GM12878 (cell line): ENCODE measurements at regions of chr11 and their contacts with region 1.

Region 1: DNA sequence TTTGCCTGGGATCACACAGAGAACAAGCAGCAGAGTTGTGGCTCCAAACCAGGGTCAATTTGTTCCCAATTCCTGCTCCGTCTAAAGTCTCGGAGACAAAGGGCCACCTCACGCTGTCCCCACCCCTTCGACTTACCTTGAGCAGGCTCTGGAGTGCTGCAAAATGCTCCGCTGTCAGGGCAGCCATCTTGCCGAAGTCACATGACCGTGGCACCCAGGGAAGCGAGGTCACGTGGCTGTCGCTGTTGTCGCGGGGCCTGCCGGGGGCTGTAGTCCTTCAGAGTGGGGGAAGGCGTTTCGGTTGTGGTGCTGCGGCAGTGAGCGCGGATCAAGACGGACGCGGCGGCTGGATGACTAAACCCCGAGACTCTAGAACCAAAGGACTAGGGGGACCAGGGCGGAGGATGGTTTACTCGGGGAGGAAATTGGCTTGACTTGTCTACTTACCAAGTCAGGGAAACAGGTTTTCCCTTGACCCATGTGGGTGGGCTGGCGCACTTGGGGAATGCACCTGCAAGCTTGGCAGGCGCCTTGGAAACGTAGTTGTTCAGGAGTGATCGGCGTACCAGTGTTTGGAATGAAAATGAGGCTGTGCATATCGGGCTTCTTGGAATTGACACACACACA is at the start of gene COMMD9:
- DNase-seq: peak; percentile 56
- ATAC-seq: peak; percentile 98
- H3K4me3 ChIP-seq: peak within 1 kb of the TSS; percentile 93
- H3K27ac ChIP-seq: no peak within 1 kb of the TSS
- H3K4me1 ChIP-seq: peaks cover 3% of the 10 kb centered on the region; the same call in 1 of the 2 replicates
- H3K27me3 ChIP-seq: no peaks in the 10 kb centered on the region
- CTCF ChIP-seq: no peak
- EP300 ChIP-seq: no peak
- POLR2A ChIP-seq: peak; percentile 88
- RAD21 ChIP-seq: peak; percentile 19; the same call in 1 of the 2 replicates
- polyA plus RNA-seq, gene COMMD9: 102 to 119 TPM

Region 2: GRCh38 chr11:36230779-36231699 is 58.3 kb before region 1 on chr11:
- CTCF ChIA-PET with region 1: no interaction called
- POLR2A ChIA-PET with region 1: no interaction called
- RAD21 ChIA-PET with region 1: no interaction called
- SMC1A ChIA-PET with region 1: no interaction called
- in situ Hi-C with region 1: no loop called
- intact Hi-C with region 1: no loop called
- DNase-seq: no peak
- ATAC-seq: no peak
- H3K4me3 ChIP-seq: no peak overlapping the region
- H3K27ac ChIP-seq: no peak overlapping the region
- H3K4me1 ChIP-seq: no peaks in the 10 kb centered on the region
- H3K27me3 ChIP-seq: no peaks in the 10 kb centered on the region
- CTCF ChIP-seq: no peak
- EP300 ChIP-seq: no peak
- POLR2A ChIP-seq: no peak
- RAD21 ChIP-seq: no peak

Region 3: DNA sequence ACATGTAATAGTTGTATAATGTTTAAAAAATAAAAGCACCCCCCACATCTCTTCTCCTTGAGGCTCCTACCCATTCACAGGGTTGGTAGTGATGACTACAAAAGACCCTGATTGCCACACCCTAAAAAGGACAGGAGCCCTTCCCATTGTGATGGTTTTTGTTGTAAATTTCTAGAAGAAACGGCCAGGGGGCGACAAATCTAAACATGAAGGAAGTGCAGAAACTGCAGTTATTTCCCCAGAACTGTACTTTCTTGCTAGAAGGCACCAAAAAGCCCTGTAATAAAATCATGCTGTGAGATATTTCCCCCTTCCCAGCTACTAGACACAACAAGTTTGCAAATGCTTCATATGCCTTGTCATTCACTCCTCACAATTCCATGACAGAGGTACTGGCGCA is 17.5 kb after region 1 on chr11:
- CTCF ChIA-PET with region 1: interaction called, 11 read pairs
- POLR2A ChIA-PET with region 1: no interaction called
- RAD21 ChIA-PET with region 1: interaction called, 4 read pairs
- SMC1A ChIA-PET with region 1: interaction called, 20 read pairs
- in situ Hi-C with region 1: no loop called
- intact Hi-C with region 1: no loop called
- DNase-seq: no peak
- ATAC-seq: peak; percentile 79
- H3K4me3 ChIP-seq: no peak overlapping the region
- H3K27ac ChIP-seq: no peak overlapping the region
- H3K4me1 ChIP-seq: no peaks in the 10 kb centered on the region
- H3K27me3 ChIP-seq: no peaks in the 10 kb centered on the region; a peak in 1 of 4 replicates
- CTCF ChIP-seq: peak; percentile 46 to 62 (median 50); a peak in 5 of 6 replicates
- EP300 ChIP-seq: no peak
- POLR2A ChIP-seq: no peak
- RAD21 ChIP-seq: peak; percentile 83

Region 4: DNA sequence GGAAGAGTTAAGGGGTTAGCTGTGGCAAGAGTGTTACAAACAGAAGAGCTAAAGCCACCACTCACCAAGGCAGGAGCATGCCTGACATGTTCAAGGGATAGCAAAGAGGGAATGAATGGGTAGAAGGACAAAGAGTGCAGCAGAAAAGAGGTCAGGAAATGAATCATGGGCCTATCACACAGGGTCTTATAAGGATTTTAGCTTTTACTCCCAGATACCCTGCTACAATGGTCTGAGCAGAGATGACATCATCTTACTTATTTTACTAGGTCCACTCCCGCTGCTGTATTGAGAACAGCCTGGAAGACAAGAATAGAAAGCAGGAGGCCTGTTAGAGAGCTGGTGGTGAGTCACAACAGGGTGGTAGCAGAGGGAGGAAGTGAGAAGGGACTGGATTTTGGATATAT is 211.0 kb after region 1 on chr11:
- CTCF ChIA-PET with region 1: interaction called, 176 read pairs
- POLR2A ChIA-PET with region 1: no interaction called
- RAD21 ChIA-PET with region 1: interaction called, 102 read pairs
- SMC1A ChIA-PET with region 1: interaction called, 9 read pairs
- in situ Hi-C with region 1: no loop called
- intact Hi-C with region 1: no loop called
- DNase-seq: no peak
- ATAC-seq: peak; percentile 98
- H3K4me3 ChIP-seq: no peak overlapping the region
- H3K27ac ChIP-seq: 0 out of 2 replicates have a peak overlapping the region, but pooled peaks have one; percentile 18
- H3K4me1 ChIP-seq: no peaks in the 10 kb centered on the region; the same call in 1 of the 2 replicates
- H3K27me3 ChIP-seq: no peaks in the 10 kb centered on the region
- CTCF ChIP-seq: no peak
- EP300 ChIP-seq: no peak
- POLR2A ChIP-seq: no peak
- RAD21 ChIP-seq: no peak

Region 5: DNA sequence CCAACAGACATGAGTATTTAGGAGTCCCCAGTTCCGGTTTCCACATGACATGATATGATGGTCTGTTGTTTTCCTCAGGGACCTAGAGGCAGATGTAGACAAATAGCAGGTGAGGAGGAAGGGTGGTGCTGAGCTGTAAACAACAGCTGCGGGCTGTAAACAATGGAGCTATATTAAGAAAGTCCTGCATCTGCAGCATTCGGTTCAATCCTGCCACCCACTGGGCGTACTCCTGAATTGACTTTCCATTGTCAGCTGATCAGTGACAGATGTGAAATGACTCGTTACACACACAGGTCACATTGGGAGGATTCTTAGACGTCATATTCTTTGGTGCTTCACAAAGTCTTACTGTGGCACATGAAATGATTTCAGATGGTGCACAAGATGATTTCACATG is 251.7 kb after region 1 on chr11:
- CTCF ChIA-PET with region 1: interaction called, 17 read pairs
- POLR2A ChIA-PET with region 1: no interaction called
- RAD21 ChIA-PET with region 1: interaction called, 6 read pairs
- SMC1A ChIA-PET with region 1: interaction called, 5 read pairs
- in situ Hi-C with region 1: no loop called
- intact Hi-C with region 1: no loop called
- DNase-seq: peak; percentile 32
- ATAC-seq: peak; percentile 97
- H3K4me3 ChIP-seq: no peak overlapping the region
- H3K27ac ChIP-seq: no peak overlapping the region
- H3K4me1 ChIP-seq: no peaks in the 10 kb centered on the region
- H3K27me3 ChIP-seq: peaks cover 2% of the 10 kb centered on the region in 2 experiments; a peak in 3 of 4 replicates
- CTCF ChIP-seq: peak; percentile 38 to 62 (median 54); a peak in 5 of 6 replicates
- EP300 ChIP-seq: peak; percentile 57 to 65; a peak in 3 of 4 replicates
- POLR2A ChIP-seq: no peak
- RAD21 ChIP-seq: peak; percentile 56

Region 6: GRCh38 chr11:36672813-36673450 is 383.6 kb after region 1 on chr11:
- CTCF ChIA-PET with region 1: interaction called, 4 read pairs
- POLR2A ChIA-PET with region 1: no interaction called
- RAD21 ChIA-PET with region 1: interaction called, 7 read pairs
- SMC1A ChIA-PET with region 1: interaction called, 3 read pairs
- in situ Hi-C with region 1: no loop called
- intact Hi-C with region 1: loop called (anchors 10 kb)
- DNase-seq: no peak
- ATAC-seq: peak; percentile 63
- H3K4me3 ChIP-seq: no peak overlapping the region
- H3K27ac ChIP-seq: no peak overlapping the region
- H3K4me1 ChIP-seq: no peaks in the 10 kb centered on the region
- H3K27me3 ChIP-seq: no peaks in the 10 kb centered on the region
- CTCF ChIP-seq: peak; percentile 54 to 66 (median 62)
- EP300 ChIP-seq: no peak
- POLR2A ChIP-seq: no peak
- RAD21 ChIP-seq: peak; percentile 49